Natural killer cell (primary cell): ENCODE measurements at regions of chr9 and their contacts with region 1.

Region 1: DNA sequence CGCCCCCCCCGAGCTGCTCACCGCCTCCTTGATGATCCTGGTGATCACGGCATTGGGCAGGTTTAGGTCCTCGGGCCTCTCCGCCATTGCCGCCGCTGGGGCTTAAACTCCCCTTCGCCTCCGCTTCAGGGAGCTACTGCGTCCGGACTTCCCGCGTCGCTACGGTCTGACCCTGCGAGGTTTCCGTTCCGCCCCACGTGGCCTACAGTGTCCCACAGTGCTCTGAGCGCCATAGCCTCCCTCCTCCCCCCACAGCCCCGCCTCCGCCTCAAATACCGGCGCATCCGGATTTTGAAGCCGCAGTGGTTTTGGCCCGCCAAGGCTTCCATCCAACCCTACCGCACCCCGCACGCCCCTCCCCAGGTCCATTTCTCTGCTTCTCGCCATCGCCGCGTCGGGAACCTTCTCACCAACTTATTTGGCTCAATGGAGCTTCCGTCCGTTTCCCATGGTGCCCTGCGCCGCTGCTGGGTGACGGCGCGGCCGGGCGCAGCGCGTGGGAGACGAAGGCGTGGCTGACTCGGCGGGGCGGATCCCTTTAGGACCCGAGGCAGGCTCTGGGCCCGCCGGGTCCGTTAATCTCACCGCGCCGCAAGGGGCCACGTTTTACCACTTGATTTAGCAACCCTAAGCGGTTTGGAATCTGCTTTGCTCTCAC is at the starts of genes C9orf43 and POLE3:
- DNase-seq: peak; percentile 94 to 97
- ATAC-seq: peak; percentile 88 to 97 (median 91)
- H3K4me3 ChIP-seq: peak within 1 kb of the TSS; percentile 78
- H3K4me3 Mint-ChIP-seq: peak within 1 kb of the TSS; percentile 94
- H3K27ac ChIP-seq: peak within 1 kb of the TSS; percentile 95
- H3K27ac Mint-ChIP-seq: peak within 1 kb of the TSS; percentile 96 to 99
- H3K4me1 ChIP-seq: peaks cover 23% of the 10 kb centered on the region
- H3K4me1 Mint-ChIP-seq: peaks cover 24 to 28% of the 10 kb centered on the region in 2 donors
- H3K27me3 ChIP-seq: no peaks in the 10 kb centered on the region
- H3K27me3 Mint-ChIP-seq: no peaks in the 10 kb centered on the region
- CTCF ChIP-seq: no peak
- total RNA-seq, gene C9orf43: 0.45 to 0.71 (median 0.50) TPM
- total RNA-seq, gene POLE3: 59.2 to 66.7 (median 62.2) TPM

Region 2: GRCh38 chr9:113221003-113221799 is 189.1 kb before region 1 on chr9 and contains the starts of genes FKBP15 and SLC31A1:
- intact Hi-C with region 1: loop called (anchors 2 kb)
- DNase-seq: peak; percentile 96 to 99
- ATAC-seq: peak; percentile 91 to 99 (median 95)
- H3K4me3 ChIP-seq: peak within 1 kb of the TSS; percentile 96
- H3K4me3 Mint-ChIP-seq: peak within 1 kb of the TSS; percentile 97
- H3K27ac ChIP-seq: peak within 1 kb of the TSS; percentile 92
- H3K27ac Mint-ChIP-seq: peak within 1 kb of the TSS; percentile 82 to 92
- H3K4me1 ChIP-seq: peaks cover 21% of the 10 kb centered on the region
- H3K4me1 Mint-ChIP-seq: peaks cover 44 to 52% of the 10 kb centered on the region in 2 donors
- H3K27me3 ChIP-seq: no peaks in the 10 kb centered on the region
- H3K27me3 Mint-ChIP-seq: no peaks in the 10 kb centered on the region
- CTCF ChIP-seq: no peak
- total RNA-seq, gene FKBP15: 35.0 to 37.9 (median 35.9) TPM
- total RNA-seq, gene SLC31A1: 7.9 to 27.8 (median 11.8) TPM

Region 3: GRCh38 chr9:113275157-113276131 is 134.9 kb before region 1 on chr9 and contains the starts of genes CDC26 and PRPF4:
- intact Hi-C with region 1: loop called (anchors 1 kb)
- DNase-seq: peak; percentile 92 to 99
- ATAC-seq: peak; percentile 94 to 99 (median 97)
- H3K4me3 ChIP-seq: peak within 1 kb of the TSS; percentile 89
- H3K4me3 Mint-ChIP-seq: no peak within 1 kb of the TSS
- H3K27ac ChIP-seq: peak within 1 kb of the TSS; percentile 95
- H3K27ac Mint-ChIP-seq: no peak within 1 kb of the TSS
- H3K4me1 ChIP-seq: peaks cover 8% of the 10 kb centered on the region
- H3K4me1 Mint-ChIP-seq: peaks cover 8 to 15% of the 10 kb centered on the region in 2 donors
- H3K27me3 ChIP-seq: no peaks in the 10 kb centered on the region
- H3K27me3 Mint-ChIP-seq: no peaks in the 10 kb centered on the region
- CTCF ChIP-seq: no peak
- total RNA-seq, gene CDC26: 16.8 to 24.8 (median 21.5) TPM
- total RNA-seq, gene PRPF4: 16.9 to 23.2 (median 21.1) TPM

Region 4: GRCh38 chr9:113309204-113309813 is 101.0 kb before region 1 on chr9:
- intact Hi-C with region 1: loop called (anchors 1 kb)
- DNase-seq: peak in 1 of 2 donors; percentile 63
- ATAC-seq: peak; percentile 58 to 72 (median 62)
- H3K4me3 ChIP-seq: no peak overlapping the region
- H3K4me3 Mint-ChIP-seq: no peak overlapping the region
- H3K27ac ChIP-seq: no peak overlapping the region
- H3K27ac Mint-ChIP-seq: no peak overlapping the region
- H3K4me1 ChIP-seq: no peaks in the 10 kb centered on the region
- H3K4me1 Mint-ChIP-seq: no peaks in the 10 kb centered on the region
- H3K27me3 ChIP-seq: no peaks in the 10 kb centered on the region
- H3K27me3 Mint-ChIP-seq: peaks cover 0 to 2% of the 10 kb centered on the region in 2 donors
- CTCF ChIP-seq: peak; percentile 52

Region 5: DNA sequence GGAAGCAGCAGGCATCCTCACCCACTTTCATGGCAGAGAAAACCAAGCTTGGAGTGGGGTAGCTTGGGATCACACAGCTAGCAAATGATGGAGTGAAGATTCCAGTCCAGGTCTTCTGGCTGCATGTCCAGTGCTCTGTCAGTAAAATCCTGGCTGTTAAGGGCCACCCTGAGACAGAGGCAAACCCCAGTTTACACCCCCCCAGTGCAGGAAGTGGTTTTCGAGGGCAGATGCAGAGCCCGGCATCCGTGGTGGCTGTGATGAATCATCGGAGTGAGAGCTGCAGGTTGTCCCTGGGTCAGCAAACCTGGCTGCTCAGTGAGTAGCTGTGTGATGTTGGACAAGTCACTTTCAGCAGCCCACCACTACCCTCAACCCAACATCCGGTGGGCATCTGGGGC is 168.5 kb after region 1 on chr9:
- intact Hi-C with region 1: loop called (anchors 2 kb)
- DNase-seq: peak; percentile 88 to 90
- ATAC-seq: peak; percentile 62 to 80 (median 78)
- H3K4me3 ChIP-seq: no peak overlapping the region
- H3K4me3 Mint-ChIP-seq: peak overlapping the region; percentile 77
- H3K27ac ChIP-seq: peak overlapping the region; percentile 81
- H3K27ac Mint-ChIP-seq: peak overlapping the region; percentile 92 to 93
- H3K4me1 ChIP-seq: peaks cover 86% of the 10 kb centered on the region
- H3K4me1 Mint-ChIP-seq: peaks cover 88 to 100% of the 10 kb centered on the region in 2 donors
- H3K27me3 ChIP-seq: no peaks in the 10 kb centered on the region
- H3K27me3 Mint-ChIP-seq: no peaks in the 10 kb centered on the region
- CTCF ChIP-seq: no peak